ENCODE measurements at regions of chr6 and their contacts with region 1.

Region 1: GRCh38 chr6:112180095-112180820 is 74.1 kb downstream of the LAMA4 start:
- DNase-seq: peak in 3 of 10 donors; percentile 10 to 42 (median 33)

Region 2: GRCh38 chr6:112311950-112312547 is 131.8 kb after region 1 on chr6:
- intact Hi-C with region 1: loop called (anchors 1 kb)
- DNase-seq: no peak

Region 3: GRCh38 chr6:113909234-113909856 is 1729.1 kb after region 1 on chr6:
- intact Hi-C with region 1: loop called (anchors 10 kb)
- DNase-seq: no peak

Measured in posterior cingulate gyrus (tissue), 11 donors.